Naive thymus-derived CD4-positive, alpha-beta T cell (primary cell): ENCODE measurements at regions of chr7 and their contacts with region 1.

Region 1: DNA sequence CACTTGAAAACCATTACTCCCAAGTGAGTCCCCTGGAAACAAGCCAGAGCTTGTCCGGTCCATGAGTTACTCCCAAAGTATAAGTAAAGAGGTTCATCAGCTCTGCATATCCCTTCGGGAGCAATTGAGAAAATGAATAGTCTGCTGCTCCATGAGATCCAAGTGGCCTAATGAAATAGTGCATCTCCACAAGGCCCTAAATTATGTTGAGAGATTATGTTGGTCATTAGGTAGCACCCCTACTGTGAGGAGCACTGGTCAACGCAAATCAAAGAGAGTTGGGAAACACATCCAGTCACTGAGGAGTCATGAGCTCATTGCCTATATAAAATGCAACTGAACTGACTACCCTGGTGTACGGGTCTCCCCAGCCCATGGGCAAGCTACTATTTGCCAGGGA is 205.5 kb upstream of the AOAH start:
- DNase-seq: no peak
- ATAC-seq: no peak
- H3K4me3 ChIP-seq: no peak overlapping the region
- H3K4me3 Mint-ChIP-seq: no peak overlapping the region
- H3K27ac ChIP-seq: no peak overlapping the region
- H3K27ac Mint-ChIP-seq: no peak overlapping the region
- H3K4me1 ChIP-seq: peaks cover 0 to 3% of the 10 kb centered on the region in 2 donors
- H3K4me1 Mint-ChIP-seq: peaks cover 11 to 29% (median 18%) of the 10 kb centered on the region in 7 donors
- H3K27me3 ChIP-seq: no peaks in the 10 kb centered on the region
- H3K27me3 Mint-ChIP-seq: no peaks in the 10 kb centered on the region

Region 2: GRCh38 chr7:36911788-36912187 is 18.0 kb before region 1 on chr7:
- CTCF ChIA-PET with region 1: no interaction called
- POLR2A ChIA-PET with region 1: no interaction called
- intact Hi-C with region 1: loop called in 1 of 2 experiments (anchors 2 kb)
- DNase-seq: no peak
- ATAC-seq: no peak
- H3K4me3 ChIP-seq: no peak overlapping the region
- H3K4me3 Mint-ChIP-seq: no peak overlapping the region
- H3K27ac ChIP-seq: no peak overlapping the region
- H3K27ac Mint-ChIP-seq: peak overlapping the region in 2 of 9 donors; percentile 2 to 33
- H3K4me1 ChIP-seq: no peaks in the 10 kb centered on the region
- H3K4me1 Mint-ChIP-seq: peaks cover 4 to 38% (median 23%) of the 10 kb centered on the region in 7 donors
- H3K27me3 ChIP-seq: no peaks in the 10 kb centered on the region
- H3K27me3 Mint-ChIP-seq: no peaks in the 10 kb centered on the region